Common myeloid progenitor, CD34-positive (primary cell): ENCODE measurements at regions of chr19 and their contacts with region 1.

Region 1: GRCh38 chr19:9621156-9622037 is at the start of gene ZNF561:
- DNase-seq: peak; percentile 94 to 98 (median 98)
- H3K4me3 ChIP-seq: peak within 1 kb of the TSS; percentile 77 to 97 (median 94)
- H3K27ac ChIP-seq: peak within 1 kb of the TSS; percentile 95 to 99
- H3K4me1 ChIP-seq: peaks cover 2 to 21% (median 15%) of the 10 kb centered on the region in 4 experiments
- H3K27me3 ChIP-seq: no peaks in the 10 kb centered on the region

Region 2: GRCh38 chr19:9552536-9553274 is 68.7 kb before region 1 on chr19:
- CTCF ChIA-PET with region 1: no interaction called
- POLR2A ChIA-PET with region 1: no interaction called
- DNase-seq: no peak
- H3K4me3 ChIP-seq: no peak overlapping the region
- H3K27ac ChIP-seq: no peak overlapping the region
- H3K4me1 ChIP-seq: no peaks in the 10 kb centered on the region
- H3K27me3 ChIP-seq: no peaks in the 10 kb centered on the region

Region 3: DNA sequence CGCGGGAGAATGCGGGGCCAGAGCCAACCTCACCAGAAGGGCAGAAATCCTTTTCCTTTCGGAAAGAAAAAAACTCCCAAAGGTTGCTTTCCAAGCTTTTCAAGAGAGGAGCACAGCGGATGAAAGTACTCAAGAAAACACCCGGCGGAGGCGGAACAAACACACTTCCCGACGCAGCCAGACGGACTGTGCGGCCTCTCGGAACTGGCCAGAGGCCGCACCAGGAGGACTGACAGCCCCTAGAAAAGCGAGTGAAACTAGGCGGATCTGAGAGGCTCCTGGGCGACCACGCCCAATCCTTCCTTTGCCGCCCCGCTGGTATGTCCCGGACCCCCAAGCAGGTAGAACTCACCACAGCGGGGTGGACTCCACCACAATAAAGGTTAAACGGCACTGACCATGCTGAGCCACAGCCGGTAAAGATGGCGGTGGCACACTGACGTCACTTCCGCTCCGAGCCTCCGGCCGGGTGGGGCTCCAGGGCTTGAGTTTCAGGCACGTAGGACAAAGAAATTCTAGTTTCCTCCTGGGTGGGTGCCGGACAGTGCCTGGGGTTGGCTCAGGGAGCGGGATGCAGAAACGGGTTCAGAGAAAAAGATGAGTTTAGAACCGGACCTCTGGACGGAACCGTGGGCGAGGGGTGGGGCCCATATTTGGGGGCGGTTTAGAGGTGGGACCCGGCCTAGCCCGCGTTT is 53.4 kb after region 1 on chr19 and contains the start of gene ZNF562:
- CTCF ChIA-PET with region 1: no interaction called
- POLR2A ChIA-PET with region 1: no interaction called
- DNase-seq: peak; percentile 89 to 95 (median 94)
- H3K4me3 ChIP-seq: peak within 1 kb of the TSS; percentile 71 to 99 (median 92)
- H3K27ac ChIP-seq: peak within 1 kb of the TSS; percentile 88 to 97
- H3K4me1 ChIP-seq: peaks cover 0 to 6% (median 0%) of the 10 kb centered on the region in 4 experiments
- H3K27me3 ChIP-seq: no peaks in the 10 kb centered on the region

Region 4: DNA sequence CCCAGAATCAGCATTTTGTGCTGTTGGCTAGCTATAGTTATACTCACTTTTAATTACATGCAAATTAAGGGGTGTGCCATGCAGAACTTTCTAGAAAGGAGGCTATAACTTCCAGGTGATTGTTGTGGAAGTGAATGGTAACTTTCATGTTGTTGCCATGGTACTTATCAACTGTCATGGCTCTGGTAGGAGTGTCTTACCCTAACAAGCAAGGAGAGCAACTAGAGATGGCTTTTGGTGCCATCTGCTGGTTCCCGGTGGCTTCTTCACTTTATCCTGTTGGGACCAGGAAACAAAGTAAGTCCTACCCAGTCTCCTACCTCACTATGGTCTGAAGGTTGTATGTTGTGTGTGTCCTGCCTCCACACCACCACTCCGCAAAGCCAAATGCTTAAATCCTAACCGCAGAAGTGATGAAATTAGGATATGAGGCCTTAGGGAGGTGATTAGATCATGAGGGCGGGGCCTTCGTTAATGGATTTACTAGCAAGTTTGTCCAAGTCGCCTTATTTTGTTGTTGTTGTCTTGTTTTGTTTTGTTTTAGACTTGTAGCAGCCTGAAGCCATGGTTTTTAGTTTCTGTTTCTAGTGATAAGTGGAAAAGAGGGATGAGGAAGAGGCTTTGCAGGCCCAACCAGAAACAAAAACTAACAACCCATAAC is 174.8 kb after region 1 on chr19:
- CTCF ChIA-PET with region 1: interaction called, 11 read pairs
- POLR2A ChIA-PET with region 1: no interaction called
- DNase-seq: peak; percentile 94 to 97 (median 96)
- H3K4me3 ChIP-seq: no peak overlapping the region
- H3K27ac ChIP-seq: peak overlapping the region in 1 of 2 experiments; percentile 81
- H3K4me1 ChIP-seq: peaks cover 2 to 17% (median 7%) of the 10 kb centered on the region in 4 experiments
- H3K27me3 ChIP-seq: no peaks in the 10 kb centered on the region